Aorta (tissue), 5 donors: ENCODE measurements at regions of chr3 and their contacts with region 1.

Region 1: GRCh38 chr3:59774634-59775033 is 724.8 kb upstream of the CFAP20DC start:
- DNase-seq: no peak
- ATAC-seq: no peak
- H3K4me3 ChIP-seq: no peak overlapping the region
- H3K27ac ChIP-seq: no peak overlapping the region
- H3K4me1 ChIP-seq: no peaks in the 10 kb centered on the region
- H3K27me3 ChIP-seq: no peaks in the 10 kb centered on the region

Region 2: DNA sequence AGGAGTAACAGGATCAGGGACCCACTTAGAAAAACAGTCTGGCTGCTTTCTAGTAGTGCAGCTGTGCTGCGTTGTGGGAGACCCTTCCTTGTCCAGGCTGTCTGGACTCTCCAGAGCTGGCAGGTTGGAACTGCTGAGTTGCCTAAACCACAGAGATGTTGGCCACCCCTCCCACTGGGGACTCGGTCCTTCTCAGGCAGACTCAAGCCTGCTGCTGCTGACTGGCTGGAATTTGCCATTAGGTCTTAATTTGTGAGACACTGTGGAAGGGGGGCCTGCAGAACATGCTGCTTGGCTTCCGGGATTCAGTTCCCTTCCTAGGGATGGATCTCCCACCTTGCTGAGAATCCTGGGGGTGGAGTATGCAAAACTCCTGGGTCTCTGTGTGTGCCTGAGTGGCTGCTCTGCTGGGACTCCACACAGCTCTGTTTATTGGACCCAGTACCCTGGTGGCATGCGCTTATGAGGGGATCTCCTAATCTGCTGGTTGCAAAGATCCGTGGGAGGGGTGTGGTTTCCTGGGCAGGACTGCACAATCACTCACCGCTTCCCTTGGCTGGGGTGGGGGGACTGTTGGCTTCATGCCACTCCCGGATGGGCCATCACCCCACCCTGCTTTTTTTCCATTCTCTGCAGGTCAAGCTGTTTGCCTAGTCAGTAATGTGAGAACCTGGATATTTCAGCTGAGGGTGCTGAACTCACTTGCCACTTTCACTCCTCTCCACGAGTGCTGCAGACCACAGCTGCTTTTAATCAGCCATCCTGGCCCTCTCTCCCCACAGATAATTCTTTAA is 875.3 kb before region 1 on chr3:
- intact Hi-C with region 1: no loop called
- DNase-seq: no peak
- ATAC-seq: peak; percentile 76
- H3K4me3 ChIP-seq: no peak overlapping the region
- H3K27ac ChIP-seq: no peak overlapping the region
- H3K4me1 ChIP-seq: no peaks in the 10 kb centered on the region
- H3K27me3 ChIP-seq: no peaks in the 10 kb centered on the region

Region 3: GRCh38 chr3:59850417-59850816 is 75.8 kb after region 1 on chr3:
- intact Hi-C with region 1: loop called in 1 of 2 experiments (anchors 5 kb)
- DNase-seq: no peak
- ATAC-seq: no peak
- H3K4me3 ChIP-seq: no peak overlapping the region
- H3K27ac ChIP-seq: no peak overlapping the region
- H3K4me1 ChIP-seq: no peaks in the 10 kb centered on the region
- H3K27me3 ChIP-seq: no peaks in the 10 kb centered on the region